GM12878 (cell line): ENCODE measurements at regions of chr9 and their contacts with region 1.

Region 1: DNA sequence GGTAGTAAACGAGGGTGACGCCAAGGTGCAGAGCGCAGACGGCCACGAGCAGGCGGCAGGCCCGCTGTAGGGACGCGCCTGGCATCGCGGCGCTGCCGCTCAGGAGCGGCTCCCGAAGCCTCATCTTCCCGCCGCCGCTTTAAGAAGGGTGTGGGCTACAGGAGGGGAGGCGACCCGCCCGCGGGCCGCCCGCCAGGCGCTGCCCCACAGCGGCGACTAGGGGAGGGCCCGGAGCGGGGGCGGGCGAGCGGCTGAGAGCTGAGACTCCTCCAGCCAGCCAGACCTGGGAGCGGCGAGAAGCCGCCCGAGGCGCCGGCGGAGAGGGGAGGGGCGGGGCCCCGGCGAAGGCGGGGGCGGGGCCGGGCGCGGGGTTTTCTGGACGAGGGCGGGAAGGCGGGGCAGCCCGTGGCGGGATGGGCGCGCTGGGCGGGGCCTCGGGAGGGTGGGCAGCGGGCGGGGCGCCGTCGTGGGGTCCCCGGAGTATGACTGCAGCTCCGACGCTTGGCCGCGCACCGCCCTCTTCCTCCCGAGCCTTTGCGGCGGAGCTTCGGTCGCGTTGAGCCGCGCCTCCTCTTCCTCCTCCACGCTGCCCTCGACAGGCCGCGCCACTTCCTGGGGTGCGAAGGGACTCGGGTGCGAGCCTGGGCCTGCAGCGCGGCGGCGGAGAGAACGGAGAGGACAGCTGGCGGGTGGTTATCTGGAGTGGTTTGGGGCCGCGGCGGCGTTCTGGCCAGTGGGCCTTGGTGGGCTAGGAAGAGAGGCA is at the start of gene B4GALT1:
- DNase-seq: peak; percentile 75
- ATAC-seq: peak; percentile 69
- H3K4me3 ChIP-seq: peak within 1 kb of the TSS; percentile 90
- H3K27ac ChIP-seq: peak within 1 kb of the TSS; percentile 92
- H3K4me1 ChIP-seq: peaks cover 32% of the 10 kb centered on the region
- H3K27me3 ChIP-seq: no peaks in the 10 kb centered on the region
- CTCF ChIP-seq: 0 out of 6 replicates have a peak, but pooled peaks of 1 of the 3 experiments have one; percentile 1
- EP300 ChIP-seq: 0 out of 4 replicates have a peak, but pooled peaks of 1 of the 2 experiments have one; percentile 11
- POLR2A ChIP-seq: peak; percentile 93
- RAD21 ChIP-seq: peak; percentile 25; the same call in 1 of the 2 replicates
- polyA plus RNA-seq, gene B4GALT1: 22.4 to 23.3 TPM

Region 2: GRCh38 chr9:33024966-33025571 is 142.2 kb before region 1 on chr9 and contains the start of gene DNAJA1:
- CTCF ChIA-PET with region 1: interaction called, 4 read pairs
- POLR2A ChIA-PET with region 1: interaction called, 9 read pairs
- RAD21 ChIA-PET with region 1: interaction called, 4 read pairs
- SMC1A ChIA-PET with region 1: interaction called, 7 read pairs
- in situ Hi-C with region 1: no loop called
- intact Hi-C with region 1: loop called (anchors 5 kb)
- DNase-seq: peak; percentile 57
- ATAC-seq: peak; percentile 90
- H3K4me3 ChIP-seq: peak within 1 kb of the TSS; percentile 75
- H3K27ac ChIP-seq: peak within 1 kb of the TSS; percentile 97
- H3K4me1 ChIP-seq: peaks cover 10% of the 10 kb centered on the region
- H3K27me3 ChIP-seq: no peaks in the 10 kb centered on the region
- CTCF ChIP-seq: no peak
- EP300 ChIP-seq: no peak; a peak in 1 of 4 replicates
- POLR2A ChIP-seq: peak; percentile 99
- RAD21 ChIP-seq: no peak
- polyA plus RNA-seq, gene DNAJA1: 115 to 149 TPM

Region 3: GRCh38 chr9:33076358-33077004 is 90.7 kb before region 1 on chr9 and contains the start of gene SMU1:
- CTCF ChIA-PET with region 1: interaction called, 15 read pairs
- POLR2A ChIA-PET with region 1: interaction called, 7 read pairs
- RAD21 ChIA-PET with region 1: interaction called, 4 read pairs
- SMC1A ChIA-PET with region 1: interaction called, 6 read pairs
- in situ Hi-C with region 1: no loop called
- intact Hi-C with region 1: loop called (anchors 2 kb)
- DNase-seq: peak; percentile 86
- ATAC-seq: peak; percentile 98
- H3K4me3 ChIP-seq: peak within 1 kb of the TSS; percentile 88
- H3K27ac ChIP-seq: peak within 1 kb of the TSS; percentile 79
- H3K4me1 ChIP-seq: peaks cover 10% of the 10 kb centered on the region; the same call in 1 of the 2 replicates
- H3K27me3 ChIP-seq: no peaks in the 10 kb centered on the region
- CTCF ChIP-seq: no peak
- EP300 ChIP-seq: no peak
- POLR2A ChIP-seq: peak; percentile 94
- RAD21 ChIP-seq: no peak
- polyA plus RNA-seq, gene SMU1: 18.5 to 20.7 TPM

Region 4: GRCh38 chr9:33082538-33083326 is 84.5 kb before region 1 on chr9:
- CTCF ChIA-PET with region 1: interaction called, 15 read pairs
- POLR2A ChIA-PET with region 1: interaction called, 5 read pairs
- RAD21 ChIA-PET with region 1: interaction called, 14 read pairs
- SMC1A ChIA-PET with region 1: interaction called, 6 read pairs
- in situ Hi-C with region 1: no loop called
- intact Hi-C with region 1: loop called (anchors 2 kb)
- DNase-seq: no peak
- ATAC-seq: peak; percentile 32
- H3K4me3 ChIP-seq: no peak overlapping the region
- H3K27ac ChIP-seq: no peak overlapping the region
- H3K4me1 ChIP-seq: peaks cover 19% of the 10 kb centered on the region
- H3K27me3 ChIP-seq: no peaks in the 10 kb centered on the region
- CTCF ChIP-seq: no peak
- EP300 ChIP-seq: no peak
- POLR2A ChIP-seq: no peak
- RAD21 ChIP-seq: no peak

Region 5: GRCh38 chr9:33130508-33130911 is 36.7 kb before region 1 on chr9:
- CTCF ChIA-PET with region 1: interaction called, 12 read pairs
- POLR2A ChIA-PET with region 1: interaction called, 23 read pairs
- RAD21 ChIA-PET with region 1: interaction called, 5 read pairs
- SMC1A ChIA-PET with region 1: interaction called, 172 read pairs
- in situ Hi-C with region 1: no loop called
- intact Hi-C with region 1: loop called (anchors 5 kb)
- DNase-seq: no peak
- ATAC-seq: peak; percentile 92
- H3K4me3 ChIP-seq: peak overlapping the region; percentile 1; the same call in 1 of the 2 replicates
- H3K27ac ChIP-seq: peak overlapping the region; percentile 75
- H3K4me1 ChIP-seq: peaks cover 52% of the 10 kb centered on the region
- H3K27me3 ChIP-seq: no peaks in the 10 kb centered on the region
- CTCF ChIP-seq: no peak
- EP300 ChIP-seq: no peak
- POLR2A ChIP-seq: no peak
- RAD21 ChIP-seq: 0 out of 2 replicates have a peak, but pooled peaks have one; percentile 4

Region 6: DNA sequence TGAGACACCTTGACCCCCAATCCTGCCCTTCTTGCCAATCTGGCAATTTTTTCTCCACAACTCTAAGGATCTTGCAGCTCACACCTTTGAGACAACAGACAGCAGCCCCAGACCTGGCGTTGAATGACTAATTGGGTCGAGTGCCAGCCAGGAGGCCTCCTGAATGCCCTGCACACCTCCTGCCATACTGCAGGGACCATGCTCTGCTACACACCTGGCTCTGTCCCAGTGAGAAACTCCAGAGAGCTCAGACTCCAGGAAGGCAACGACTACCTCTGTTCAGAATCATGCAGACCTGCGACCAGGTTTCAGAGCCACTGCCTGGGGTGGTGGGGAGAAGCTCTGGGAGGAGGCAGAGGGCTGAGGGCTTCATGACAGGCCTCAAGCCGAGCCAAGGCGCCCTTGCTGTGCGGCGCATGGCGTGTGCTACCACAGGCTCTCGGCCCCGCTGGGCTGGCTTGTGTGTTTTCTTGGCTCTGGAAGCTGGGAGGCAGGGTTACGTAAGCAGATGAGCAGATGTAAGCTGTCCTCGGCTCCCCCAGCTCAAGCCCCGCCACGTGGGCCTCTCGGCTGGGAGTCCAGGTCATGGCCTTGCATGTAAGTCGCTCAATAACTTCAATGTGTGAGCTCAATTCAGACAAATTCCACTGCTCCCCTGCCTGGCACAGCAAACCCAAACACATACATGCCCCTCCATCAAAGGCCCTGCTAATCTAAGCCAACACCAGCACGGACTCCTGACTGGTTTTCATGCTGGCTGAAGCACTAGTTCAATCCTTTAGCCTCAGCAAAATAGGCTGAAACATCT is 27.6 kb before region 1 on chr9:
- CTCF ChIA-PET with region 1: interaction called, 58 read pairs
- POLR2A ChIA-PET with region 1: interaction called, 73 read pairs
- RAD21 ChIA-PET with region 1: interaction called, 46 read pairs
- SMC1A ChIA-PET with region 1: interaction called, 172 read pairs
- in situ Hi-C with region 1: no loop called
- intact Hi-C with region 1: no loop called
- DNase-seq: no peak
- ATAC-seq: no peak
- H3K4me3 ChIP-seq: no peak overlapping the region
- H3K27ac ChIP-seq: peak overlapping the region; percentile 85
- H3K4me1 ChIP-seq: peaks cover 94% of the 10 kb centered on the region
- H3K27me3 ChIP-seq: no peaks in the 10 kb centered on the region
- CTCF ChIP-seq: no peak
- EP300 ChIP-seq: no peak
- POLR2A ChIP-seq: peak; percentile 45; the same call in 1 of the 2 replicates
- RAD21 ChIP-seq: no peak

Region 7: DNA sequence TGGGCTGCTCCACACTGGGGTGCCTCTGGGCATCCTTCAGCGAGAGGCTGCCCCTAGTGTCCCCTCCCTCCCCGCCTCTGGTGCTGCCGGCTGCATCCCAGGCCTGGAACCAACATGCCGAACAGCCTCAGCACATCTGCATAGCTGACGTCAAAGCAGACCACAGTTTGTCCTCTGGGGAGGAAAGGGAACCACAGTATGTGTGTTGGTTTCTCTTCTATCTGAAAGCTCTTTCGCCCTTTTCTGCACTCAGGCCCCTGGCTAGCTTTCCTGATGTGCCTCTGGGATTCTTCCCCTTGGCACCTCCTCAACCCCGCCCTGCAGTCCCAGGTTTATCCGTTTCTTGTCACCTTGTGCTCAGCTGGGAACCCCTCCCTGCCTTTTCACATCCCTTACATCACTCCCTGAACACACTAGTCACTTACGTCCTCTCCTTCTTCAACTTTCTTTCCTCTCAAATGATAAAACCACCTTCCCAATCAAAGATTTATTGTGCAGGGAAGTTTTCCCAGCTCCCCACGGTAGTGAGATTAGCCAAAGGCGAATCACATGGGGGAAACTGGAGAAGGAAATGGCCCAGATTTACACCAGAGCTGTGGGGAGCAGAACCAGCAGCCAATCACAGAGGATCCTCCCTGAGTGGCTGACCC is 35.5 kb after region 1 on chr9:
- CTCF ChIA-PET with region 1: interaction called, 12 read pairs
- POLR2A ChIA-PET with region 1: interaction called, 7 read pairs
- RAD21 ChIA-PET with region 1: interaction called, 4 read pairs
- SMC1A ChIA-PET with region 1: interaction called, 7 read pairs
- in situ Hi-C with region 1: no loop called
- intact Hi-C with region 1: loop called (anchors 2 kb)
- DNase-seq: peak; percentile 72
- ATAC-seq: peak; percentile 99
- H3K4me3 ChIP-seq: no peak overlapping the region
- H3K27ac ChIP-seq: peak overlapping the region; percentile 31; the same call in 1 of the 2 replicates
- H3K4me1 ChIP-seq: peaks cover 19% of the 10 kb centered on the region
- H3K27me3 ChIP-seq: no peaks in the 10 kb centered on the region
- CTCF ChIP-seq: no peak
- EP300 ChIP-seq: peak in 1 of 2 experiments; percentile 83; a peak in 1 of 4 replicates
- POLR2A ChIP-seq: no peak
- RAD21 ChIP-seq: no peak